Common myeloid progenitor, CD34-positive (primary cell): ENCODE measurements at regions of chr16 and their contacts with region 1.

Region 1: GRCh38 chr16:85564277-85565051 is 48.7 kb upstream of the GSE1 start:
- DNase-seq: peak; percentile 63 to 72 (median 68)
- H3K4me3 ChIP-seq: no peak overlapping the region
- H3K27ac ChIP-seq: no peak overlapping the region
- H3K4me1 ChIP-seq: peaks cover 0 to 88% (median 81%) of the 10 kb centered on the region in 4 experiments
- H3K27me3 ChIP-seq: no peaks in the 10 kb centered on the region

Region 2: GRCh38 chr16:85610508-85611332 is 46.3 kb after region 1 on chr16:
- CTCF ChIA-PET with region 1: interaction called, 17 read pairs
- POLR2A ChIA-PET with region 1: no interaction called
- DNase-seq: peak; percentile 84 to 88 (median 86)
- H3K4me3 ChIP-seq: peak overlapping the region in 5 of 7 experiments; percentile 36 to 85 (median 65)
- H3K27ac ChIP-seq: peak overlapping the region; percentile 23 to 71
- H3K4me1 ChIP-seq: peaks cover 3 to 73% (median 60%) of the 10 kb centered on the region in 4 experiments
- H3K27me3 ChIP-seq: no peaks in the 10 kb centered on the region

Region 3: GRCh38 chr16:85615852-85616606 is 51.6 kb after region 1 on chr16:
- CTCF ChIA-PET with region 1: interaction called, 17 read pairs
- POLR2A ChIA-PET with region 1: no interaction called
- DNase-seq: peak; percentile 95 to 98 (median 98)
- H3K4me3 ChIP-seq: peak overlapping the region; percentile 34 to 85 (median 74)
- H3K27ac ChIP-seq: peak overlapping the region; percentile 42 to 87
- H3K4me1 ChIP-seq: peaks cover 5 to 64% (median 50%) of the 10 kb centered on the region in 4 experiments
- H3K27me3 ChIP-seq: no peaks in the 10 kb centered on the region

Region 4: DNA sequence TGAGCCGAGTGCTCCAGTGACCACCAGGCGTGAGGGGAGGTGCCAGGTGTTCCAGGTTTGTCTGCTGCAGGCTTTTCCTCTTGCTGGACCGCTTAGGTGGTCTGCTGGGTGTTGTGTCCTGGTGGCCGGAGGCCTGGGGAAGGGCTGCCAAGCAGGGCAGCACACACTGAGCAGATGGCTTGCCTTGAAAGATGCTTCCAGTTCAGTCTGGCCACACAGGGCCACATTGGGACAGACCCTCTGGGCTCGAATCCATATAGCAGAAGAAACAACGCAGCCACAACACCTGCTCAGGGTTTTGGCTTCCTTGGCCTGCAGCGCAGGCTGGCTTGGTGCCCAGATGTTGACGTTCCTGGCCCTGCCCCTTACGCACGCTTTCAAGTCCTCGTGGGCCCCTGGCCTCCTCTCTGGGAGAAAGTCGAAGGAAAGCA is 99.4 kb after region 1 on chr16:
- CTCF ChIA-PET with region 1: no interaction called
- POLR2A ChIA-PET with region 1: no interaction called
- DNase-seq: no peak
- H3K4me3 ChIP-seq: no peak overlapping the region
- H3K27ac ChIP-seq: no peak overlapping the region
- H3K4me1 ChIP-seq: no peaks in the 10 kb centered on the region
- H3K27me3 ChIP-seq: no peaks in the 10 kb centered on the region